H1 (cell line): ENCODE measurements at regions of chr3 and their contacts with region 1.

Region 1: GRCh38 chr3:57397175-57398026 is 104.9 kb upstream of the ASB14 start:
- DNase-seq: peak; percentile 39 to 64
- H3K4me3 ChIP-seq: no peak overlapping the region
- H3K27ac ChIP-seq: no peak overlapping the region
- H3K4me1 ChIP-seq: no peaks in the 10 kb centered on the region
- H3K27me3 ChIP-seq: no peaks in the 10 kb centered on the region
- CTCF ChIP-seq: peak; percentile 73 to 96 (median 86)
- EP300 ChIP-seq: no peak
- POLR2A ChIP-seq: no peak
- RAD21 ChIP-seq: peak; percentile 87 to 91

Region 2: DNA sequence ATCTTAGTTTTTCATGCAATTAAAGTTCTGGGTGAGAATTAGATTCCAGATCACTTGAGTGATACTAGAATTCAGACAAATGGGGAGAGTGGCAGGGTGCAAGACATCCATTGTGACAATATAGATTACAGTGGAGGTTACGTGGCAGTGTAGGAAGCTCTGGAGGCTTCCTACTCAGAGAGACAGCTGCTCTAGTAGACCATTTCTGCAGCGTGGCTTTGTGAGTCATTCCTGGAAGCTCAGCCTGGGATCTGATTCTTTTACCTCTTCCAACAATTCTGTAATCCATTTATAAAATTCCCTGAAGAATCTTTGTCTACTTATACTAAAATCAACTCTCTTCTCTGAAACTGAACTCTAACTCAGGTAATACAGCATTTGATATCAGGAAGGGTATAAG is 14.5 kb before region 1 on chr3:
- CTCF ChIA-PET with region 1: interaction called, 22 read pairs
- POLR2A ChIA-PET with region 1: interaction called, 3 read pairs
- DNase-seq: no peak
- H3K4me3 ChIP-seq: no peak overlapping the region
- H3K27ac ChIP-seq: no peak overlapping the region
- H3K4me1 ChIP-seq: peaks cover 0 to 2% (median 1%) of the 10 kb centered on the region in 4 experiments; a peak in 3 of 7 replicates
- H3K27me3 ChIP-seq: no peaks in the 10 kb centered on the region
- CTCF ChIP-seq: no peak
- EP300 ChIP-seq: no peak
- POLR2A ChIP-seq: no peak
- RAD21 ChIP-seq: no peak

Region 3: DNA sequence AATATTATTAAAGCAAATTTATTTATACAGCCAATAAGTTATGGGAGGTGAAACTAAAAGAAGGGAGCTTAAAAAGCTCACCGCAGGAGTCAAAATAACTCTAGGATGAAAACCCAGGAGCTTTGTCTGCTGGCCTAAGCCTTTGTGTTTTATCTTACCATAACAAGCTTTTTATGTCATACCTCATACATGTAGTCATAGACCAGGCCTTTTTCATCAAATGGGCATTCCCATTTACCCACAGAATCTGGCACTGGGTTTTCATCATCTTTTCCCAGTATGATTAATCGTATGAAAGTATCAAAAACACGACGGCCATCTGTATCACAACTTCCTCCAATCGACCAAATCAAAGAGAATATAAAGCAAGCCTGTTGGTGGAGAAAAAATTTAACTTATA is 23.9 kb after region 1 on chr3:
- CTCF ChIA-PET with region 1: interaction called, 14 read pairs
- POLR2A ChIA-PET with region 1: no interaction called
- DNase-seq: no peak
- H3K4me3 ChIP-seq: no peak overlapping the region
- H3K27ac ChIP-seq: no peak overlapping the region
- H3K4me1 ChIP-seq: no peaks in the 10 kb centered on the region
- H3K27me3 ChIP-seq: no peaks in the 10 kb centered on the region
- CTCF ChIP-seq: no peak
- EP300 ChIP-seq: no peak
- POLR2A ChIP-seq: no peak
- RAD21 ChIP-seq: no peak

Region 4: GRCh38 chr3:57434041-57434440 is 36.6 kb after region 1 on chr3:
- CTCF ChIA-PET with region 1: interaction called, 56 read pairs
- POLR2A ChIA-PET with region 1: no interaction called
- DNase-seq: no peak
- H3K4me3 ChIP-seq: no peak overlapping the region
- H3K27ac ChIP-seq: no peak overlapping the region
- H3K4me1 ChIP-seq: no peaks in the 10 kb centered on the region
- H3K27me3 ChIP-seq: no peaks in the 10 kb centered on the region
- CTCF ChIP-seq: peak in 2 of 3 experiments; percentile 43 to 58; a peak in 2 of 4 replicates
- EP300 ChIP-seq: no peak
- POLR2A ChIP-seq: no peak
- RAD21 ChIP-seq: peak; percentile 55 to 67

Region 5: GRCh38 chr3:57446318-57446841 is 49.0 kb after region 1 on chr3:
- CTCF ChIA-PET with region 1: interaction called, 15 read pairs
- POLR2A ChIA-PET with region 1: no interaction called
- DNase-seq: no peak
- H3K4me3 ChIP-seq: no peak overlapping the region
- H3K27ac ChIP-seq: no peak overlapping the region
- H3K4me1 ChIP-seq: peaks cover 0 to 3% (median under 1%) of the 10 kb centered on the region in 4 experiments; a peak in 1 of 7 replicates
- H3K27me3 ChIP-seq: no peaks in the 10 kb centered on the region
- CTCF ChIP-seq: no peak
- EP300 ChIP-seq: no peak
- POLR2A ChIP-seq: no peak
- RAD21 ChIP-seq: no peak